Dorsolateral prefrontal cortex (tissue), 120 donors: ENCODE measurements at regions of chr7 and their contacts with region 1.

Region 1: DNA sequence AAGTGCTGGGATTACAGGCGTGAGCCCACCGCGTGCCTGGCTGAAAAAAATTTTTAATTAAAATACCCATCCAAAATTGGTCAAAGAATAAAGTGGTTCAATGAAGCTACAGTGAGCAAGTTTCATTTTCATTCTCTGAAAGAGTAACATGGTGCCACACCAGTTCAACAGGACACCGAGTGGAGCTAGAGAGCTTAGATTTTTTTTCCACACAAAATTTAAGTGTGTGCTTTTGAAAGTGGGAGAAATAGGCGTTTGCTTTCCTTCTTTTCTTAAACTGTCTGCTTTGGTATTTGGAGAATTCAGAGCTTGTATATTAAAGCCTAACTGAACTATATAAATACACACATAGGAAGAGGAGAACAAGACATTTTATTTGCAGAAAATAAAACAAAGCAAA is 43.4 kb downstream of the BPGM start:
- DNase-seq: peak in 2 of 10 donors; percentile 15 to 23
- H3K4me3 ChIP-seq: peak overlapping the region in 52 of 59 donors; percentile 12 to 58 (median 36)
- H3K27ac ChIP-seq: peak overlapping the region in 58 of 59 donors; percentile 35 to 95 (median 86)
- H3K27me3 ChIP-seq: no peaks in the 10 kb centered on the region
- CTCF ChIP-seq: peak; percentile 32 to 83 (median 68)

Region 2: GRCh38 chr7:134574322-134574721 is 115.7 kb before region 1 on chr7:
- intact Hi-C with region 1: no loop called
- DNase-seq: no peak
- H3K4me3 ChIP-seq: no peak overlapping the region
- H3K27ac ChIP-seq: no peak overlapping the region
- H3K27me3 ChIP-seq: no peaks in the 10 kb centered on the region
- CTCF ChIP-seq: no peak

Region 3: DNA sequence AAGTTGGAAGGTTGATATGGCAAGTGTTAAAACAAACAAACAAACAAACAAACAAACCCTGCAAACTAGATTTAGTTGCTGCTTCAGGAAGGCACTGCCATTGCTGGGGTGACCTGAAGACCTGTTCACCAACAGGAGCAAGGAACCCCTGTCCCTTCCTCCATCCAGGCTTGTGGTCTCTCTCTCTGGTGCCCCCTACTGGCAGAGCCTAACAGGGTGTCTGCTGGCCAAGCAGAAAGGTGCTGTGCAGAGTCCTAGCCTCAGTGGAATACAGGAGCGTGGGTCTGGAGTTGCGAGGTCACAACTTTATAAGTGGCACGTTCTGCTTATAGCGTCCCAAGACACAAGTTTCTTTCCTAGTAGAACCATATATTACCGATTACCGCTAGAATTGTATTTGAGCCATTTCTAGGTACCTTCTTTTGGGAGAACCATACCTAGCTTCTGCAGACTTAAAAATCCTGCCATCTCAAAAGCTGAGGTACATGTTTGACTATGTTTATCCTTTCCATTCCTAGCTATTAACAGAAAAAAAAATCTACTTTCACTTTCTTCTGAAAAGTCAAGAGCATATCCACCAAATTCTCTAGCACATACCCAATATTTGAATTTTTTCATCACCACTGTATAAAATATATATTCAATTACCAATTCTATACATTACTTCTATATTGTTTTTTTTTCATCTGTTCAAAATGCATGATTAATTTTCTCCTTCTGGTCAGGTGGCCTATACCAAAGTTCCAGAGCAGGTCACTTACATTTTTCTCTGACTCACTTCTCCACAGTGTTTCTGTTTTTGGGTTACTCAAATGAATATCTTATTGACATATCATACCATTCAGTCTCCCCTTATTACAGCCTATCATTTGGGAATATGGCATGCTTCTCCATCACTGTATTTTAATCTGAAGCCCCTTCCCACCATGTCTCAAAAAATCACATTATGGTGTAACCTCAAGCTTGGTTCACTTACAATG is 60.4 kb after region 1 on chr7:
- intact Hi-C with region 1: loop called (anchors 1 to 5 kb)
- DNase-seq: peak in 6 of 10 donors; percentile 11 to 58 (median 44)
- H3K4me3 ChIP-seq: no peak overlapping the region
- H3K27ac ChIP-seq: no peak overlapping the region
- H3K27me3 ChIP-seq: no peaks in the 10 kb centered on the region
- CTCF ChIP-seq: peak; percentile 32 to 83 (median 66)

Region 4: DNA sequence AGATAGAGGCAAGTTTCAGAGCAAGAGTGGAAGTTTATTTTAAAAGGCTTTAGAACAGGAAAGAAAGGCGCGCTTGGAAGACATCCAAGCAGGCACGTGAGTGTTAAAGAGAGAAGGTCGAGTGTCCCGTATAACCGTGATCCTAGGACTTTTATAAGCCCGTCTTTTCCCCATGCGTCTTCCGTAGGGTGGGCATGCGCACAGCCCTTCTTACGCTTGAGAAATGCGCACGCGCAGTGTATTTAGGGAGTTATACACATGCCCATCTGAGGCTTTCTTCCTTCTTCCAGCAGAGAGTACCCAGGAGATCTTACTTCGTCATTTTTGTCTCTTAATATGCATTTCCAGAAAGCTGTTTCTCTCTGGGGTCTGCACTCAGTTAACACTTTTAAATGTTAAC is 141.8 kb after region 1 on chr7:
- intact Hi-C with region 1: no loop called
- DNase-seq: peak in 4 of 10 donors; percentile 4 to 48 (median 24)
- H3K4me3 ChIP-seq: peak overlapping the region in 28 of 59 donors; percentile 7 to 46 (median 31)
- H3K27ac ChIP-seq: peak overlapping the region in 21 of 59 donors; percentile 4 to 67 (median 43)
- H3K27me3 ChIP-seq: no peaks in the 10 kb centered on the region
- CTCF ChIP-seq: no peak

Region 5: DNA sequence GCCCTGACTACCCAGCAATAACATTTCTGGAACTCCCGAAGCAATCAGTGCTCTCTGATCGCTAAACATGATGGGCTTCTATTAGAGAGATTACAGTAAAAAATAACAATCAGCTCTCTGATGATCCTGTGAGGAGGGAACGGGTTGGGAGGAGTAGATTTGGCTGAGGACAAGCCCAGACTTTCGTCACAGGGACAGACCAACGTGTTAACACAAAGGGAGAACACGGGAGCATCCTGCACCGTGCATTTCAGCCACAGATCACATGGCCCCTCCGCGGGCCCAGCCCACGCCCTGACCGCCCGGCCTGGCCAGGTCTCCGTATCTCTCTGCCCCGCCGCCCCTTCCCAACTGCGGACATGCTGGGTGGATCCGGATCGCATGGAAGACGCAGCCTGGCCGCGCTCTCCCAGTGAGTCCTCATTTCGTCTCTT is 201.3 kb after region 1 on chr7:
- intact Hi-C with region 1: loop called (anchors 1 to 2 kb)
- DNase-seq: peak; percentile 59 to 89 (median 82)
- H3K4me3 ChIP-seq: peak overlapping the region; percentile 49 to 90 (median 71)
- H3K27ac ChIP-seq: peak overlapping the region in 58 of 59 donors; percentile 53 to 96 (median 89)
- H3K27me3 ChIP-seq: no peaks in the 10 kb centered on the region
- CTCF ChIP-seq: peak in 9 of 56 donors; percentile 4 to 23 (median 10)

Region 6: GRCh38 chr7:134932707-134933370 is 242.8 kb after region 1 on chr7:
- intact Hi-C with region 1: loop called in 1 of 2 experiments (anchors 5 kb)
- DNase-seq: peak in 2 of 10 donors; percentile 15 to 48
- H3K4me3 ChIP-seq: peak overlapping the region in 8 of 59 donors; percentile 0 to 14 (median 4)
- H3K27ac ChIP-seq: peak overlapping the region in 47 of 59 donors; percentile 6 to 81 (median 58)
- H3K27me3 ChIP-seq: no peaks in the 10 kb centered on the region
- CTCF ChIP-seq: no peak

Region 7: GRCh38 chr7:134954197-134955082 is 264.4 kb after region 1 on chr7:
- intact Hi-C with region 1: loop called (anchors 2 kb)
- DNase-seq: no peak
- H3K4me3 ChIP-seq: no peak overlapping the region
- H3K27ac ChIP-seq: peak overlapping the region in 7 of 59 donors; percentile 6 to 49 (median 21)
- H3K27me3 ChIP-seq: no peaks in the 10 kb centered on the region
- CTCF ChIP-seq: peak; percentile 55 to 85 (median 74)

Region 8: DNA sequence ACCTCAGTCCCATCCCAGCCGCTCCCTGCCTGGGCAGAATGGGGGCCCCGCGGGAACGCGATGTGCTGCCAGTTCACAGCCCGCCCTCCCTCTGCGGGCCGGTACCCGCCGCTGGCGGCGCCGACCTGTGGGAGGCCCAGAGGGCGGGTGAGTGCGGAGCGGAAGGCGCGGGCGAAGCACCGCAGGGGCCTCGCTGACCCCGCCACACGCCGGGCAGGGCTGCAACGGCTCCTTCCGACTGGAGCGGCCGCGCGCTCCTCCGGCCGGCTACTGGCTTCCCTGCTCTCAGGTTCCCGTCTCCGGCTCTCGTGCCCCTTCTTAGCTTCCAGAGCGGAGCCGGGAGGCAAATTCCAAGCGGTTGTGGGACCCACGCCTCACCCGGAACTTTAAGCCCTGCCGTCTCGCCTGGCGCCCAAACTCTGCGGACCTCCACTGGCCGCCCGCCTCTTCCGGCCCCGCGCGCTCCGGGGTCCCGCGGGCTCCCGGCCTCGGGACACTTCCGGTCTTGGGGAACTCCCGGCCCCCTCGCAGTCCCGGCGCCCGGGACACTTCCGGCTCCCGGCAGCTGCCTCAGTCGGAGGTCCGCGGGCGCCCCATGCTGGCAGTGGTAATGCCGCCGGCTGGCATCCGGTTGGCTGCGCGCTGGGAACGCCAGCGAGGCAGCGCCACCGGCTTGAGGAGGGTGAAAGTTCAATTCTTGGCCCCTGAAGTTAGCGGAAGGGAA is 480.4 kb after region 1 on chr7 and contains the start of gene CYREN:
- intact Hi-C with region 1: loop called in 1 of 2 experiments (anchors 5 kb)
- DNase-seq: peak; percentile 71 to 94 (median 91)
- H3K4me3 ChIP-seq: peak within 1 kb of the TSS; percentile 72 to 99 (median 91)
- H3K27ac ChIP-seq: peak within 1 kb of the TSS; percentile 73 to 99 (median 97)
- H3K27me3 ChIP-seq: no peaks in the 10 kb centered on the region
- CTCF ChIP-seq: peak; percentile 42 to 93 (median 78)
- total RNA-seq, gene CYREN: 18.8 to 45.2 (median 26.9) TPM